ENCODE measurements at regions of chr7 and their contacts with region 1.

Region 1: GRCh38 chr7:17130281-17131059 is 168.0 kb upstream of the AHR start:
- DNase-seq: peak; percentile 78
- H3K4me3 Mint-ChIP-seq: peak overlapping the region; percentile 62
- H3K27ac Mint-ChIP-seq: peak overlapping the region; percentile 100
- H3K4me1 Mint-ChIP-seq: peaks cover 86% of the 10 kb centered on the region
- H3K27me3 Mint-ChIP-seq: no peaks in the 10 kb centered on the region
- CTCF ChIP-seq: no peak

Region 2: DNA sequence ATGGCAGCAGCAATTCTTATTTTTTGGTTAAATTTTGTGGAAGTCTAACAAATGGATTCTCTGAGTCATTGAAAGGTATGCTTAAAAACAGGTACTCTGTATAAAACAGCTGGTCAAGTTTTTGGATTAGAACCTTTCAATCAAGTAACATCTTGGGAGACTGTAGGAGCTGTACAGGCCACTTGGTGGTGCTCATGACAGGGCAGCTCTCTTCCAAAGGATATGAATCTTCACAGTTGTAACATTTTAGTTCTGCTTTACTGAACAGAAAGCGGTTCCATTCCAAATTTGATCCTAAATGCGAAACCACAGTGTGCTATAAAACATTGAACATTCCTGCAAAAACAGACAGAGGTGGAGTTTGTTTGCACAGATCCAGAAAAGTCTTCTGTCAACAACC is 204.2 kb before region 1 on chr7:
- CTCF ChIA-PET with region 1: no interaction called
- intact Hi-C with region 1: loop called (anchors 5 kb)
- DNase-seq: peak; percentile 57
- H3K4me3 Mint-ChIP-seq: no peak overlapping the region
- H3K27ac Mint-ChIP-seq: peak overlapping the region; percentile 48
- H3K4me1 Mint-ChIP-seq: peaks cover 78% of the 10 kb centered on the region
- H3K27me3 Mint-ChIP-seq: no peaks in the 10 kb centered on the region
- CTCF ChIP-seq: peak; percentile 72

Region 3: DNA sequence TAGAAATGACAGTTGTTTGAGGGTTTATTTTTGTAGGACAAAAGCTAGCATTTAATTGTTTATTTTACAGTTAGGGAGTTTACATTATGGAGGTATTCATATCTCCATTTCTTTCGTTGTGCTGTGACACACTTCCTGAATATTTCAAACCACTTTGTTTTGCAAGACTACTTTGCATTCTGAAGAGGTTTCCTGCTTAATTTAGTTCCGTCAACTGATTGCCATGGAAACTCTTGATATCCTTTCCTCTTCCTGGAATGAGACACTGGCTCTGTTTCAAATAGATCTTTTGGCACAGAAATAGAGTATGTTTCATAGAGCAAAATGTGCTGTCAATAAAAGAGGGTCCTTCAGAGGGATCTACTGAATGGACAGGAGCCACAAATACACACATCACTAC is 89.1 kb before region 1 on chr7:
- CTCF ChIA-PET with region 1: no interaction called
- intact Hi-C with region 1: loop called (anchors 1 kb)
- DNase-seq: no peak
- H3K4me3 Mint-ChIP-seq: no peak overlapping the region
- H3K27ac Mint-ChIP-seq: peak overlapping the region; percentile 76
- H3K4me1 Mint-ChIP-seq: peaks cover 80% of the 10 kb centered on the region
- H3K27me3 Mint-ChIP-seq: no peaks in the 10 kb centered on the region
- CTCF ChIP-seq: no peak

Region 4: DNA sequence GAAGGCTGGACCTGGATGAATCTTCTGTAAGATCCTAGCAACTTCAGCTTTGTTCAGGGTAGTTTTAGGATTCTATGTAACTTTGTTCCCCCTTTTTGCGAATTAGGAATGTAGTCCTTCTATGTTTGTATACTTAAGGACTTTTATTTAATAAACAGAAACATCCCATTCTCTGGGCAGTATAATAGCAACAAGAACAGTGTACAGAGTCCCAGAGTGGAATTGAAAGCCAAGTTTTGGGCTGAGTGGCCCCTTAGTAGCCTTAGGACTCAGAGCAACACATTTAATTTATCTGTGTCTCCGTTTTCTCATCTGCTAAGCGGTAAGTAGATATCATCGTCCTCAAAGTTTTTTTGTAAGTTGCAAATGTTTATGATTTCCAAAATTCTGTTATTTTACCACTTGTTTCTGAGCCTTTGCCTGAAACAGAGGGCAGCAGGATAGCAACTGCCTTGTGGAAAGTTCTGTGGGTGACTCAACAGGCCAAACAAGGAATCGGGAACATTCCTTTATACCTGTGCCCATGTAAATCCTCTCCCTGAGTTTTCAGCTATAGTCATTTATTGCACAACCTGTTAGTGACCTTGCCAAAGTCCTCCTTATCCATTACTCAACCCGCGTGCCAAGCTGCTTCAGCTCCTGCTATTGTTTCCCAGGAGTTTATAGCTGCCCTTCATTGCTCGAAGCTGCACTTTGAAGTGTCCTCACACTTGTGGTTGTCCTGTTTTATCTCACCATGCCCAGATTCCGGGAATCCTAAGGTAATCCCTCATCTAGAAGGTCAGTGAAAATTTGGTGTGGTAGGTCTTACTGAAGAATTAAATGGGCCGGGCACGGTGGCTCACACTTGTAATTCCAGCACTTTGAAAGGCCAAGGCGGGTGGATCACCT is 31.1 kb before region 1 on chr7:
- CTCF ChIA-PET with region 1: interaction called, 12 read pairs
- intact Hi-C with region 1: loop called (anchors 1 kb)
- DNase-seq: peak; percentile 78
- H3K4me3 Mint-ChIP-seq: peak overlapping the region; percentile 42
- H3K27ac Mint-ChIP-seq: peak overlapping the region; percentile 92
- H3K4me1 Mint-ChIP-seq: peaks cover 70% of the 10 kb centered on the region
- H3K27me3 Mint-ChIP-seq: no peaks in the 10 kb centered on the region
- CTCF ChIP-seq: no peak

Region 5: DNA sequence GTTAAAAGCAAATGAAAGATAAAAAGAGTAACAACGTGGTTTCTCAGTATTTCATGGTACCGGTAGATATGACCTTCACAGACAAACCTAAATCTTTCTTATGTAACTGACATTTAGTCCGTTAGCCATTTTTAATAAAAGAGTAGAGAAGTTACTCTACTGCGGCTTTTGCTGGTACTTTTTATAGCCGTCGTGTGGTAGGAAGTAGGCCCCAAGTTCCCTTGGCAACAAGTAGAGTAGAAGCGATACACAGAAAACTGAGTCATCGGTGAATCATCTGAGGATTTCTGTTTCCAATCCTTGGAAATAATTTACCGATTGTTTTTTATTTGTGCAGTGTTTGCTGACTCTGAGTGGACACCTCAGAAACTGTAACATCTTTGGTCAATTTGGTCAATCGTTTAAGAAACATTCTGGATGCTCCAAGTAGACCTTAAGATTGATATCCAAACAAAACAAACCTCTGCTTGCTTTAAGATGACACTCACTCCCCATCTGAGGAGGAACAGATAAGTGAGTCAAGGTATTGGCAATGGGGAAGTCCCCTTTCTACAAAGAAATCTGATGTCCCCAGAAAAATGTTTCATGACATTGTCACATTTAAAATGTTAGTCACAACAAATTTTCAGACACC is 104.0 kb after region 1 on chr7:
- CTCF ChIA-PET with region 1: no interaction called
- intact Hi-C with region 1: no loop called
- DNase-seq: peak; percentile 76
- H3K4me3 Mint-ChIP-seq: peak overlapping the region; percentile 50
- H3K27ac Mint-ChIP-seq: peak overlapping the region; percentile 96
- H3K4me1 Mint-ChIP-seq: peaks cover 94% of the 10 kb centered on the region
- H3K27me3 Mint-ChIP-seq: peaks cover 12% of the 10 kb centered on the region
- CTCF ChIP-seq: no peak

Region 6: GRCh38 chr7:17247357-17247756 is 116.9 kb after region 1 on chr7:
- CTCF ChIA-PET with region 1: interaction called, 3 read pairs
- intact Hi-C with region 1: loop called (anchors 5 kb)
- DNase-seq: no peak
- H3K4me3 Mint-ChIP-seq: no peak overlapping the region
- H3K27ac Mint-ChIP-seq: peak overlapping the region; percentile 48
- H3K4me1 Mint-ChIP-seq: peaks cover 44% of the 10 kb centered on the region
- H3K27me3 Mint-ChIP-seq: no peaks in the 10 kb centered on the region
- CTCF ChIP-seq: no peak

Region 7: DNA sequence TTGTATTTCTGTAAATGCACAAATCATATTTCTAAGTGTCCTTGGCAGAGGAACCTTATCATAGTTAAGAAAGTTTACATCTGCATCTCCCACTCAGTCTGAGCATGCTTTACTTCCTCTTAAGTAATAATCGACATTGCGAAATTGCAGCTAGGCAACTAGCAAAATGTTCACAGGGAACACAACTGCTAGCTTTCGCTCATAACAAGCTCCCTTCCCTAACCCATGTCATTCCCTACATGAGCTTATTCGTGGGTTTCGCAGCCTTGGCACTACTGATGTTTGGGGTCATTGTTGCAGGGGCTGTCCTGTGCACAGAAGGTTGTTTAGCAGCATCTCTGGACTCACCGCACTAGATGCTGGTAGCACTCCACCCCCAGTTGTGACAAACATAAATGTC is 239.6 kb after region 1 on chr7:
- CTCF ChIA-PET with region 1: no interaction called
- intact Hi-C with region 1: loop called (anchors 5 kb)
- DNase-seq: peak; percentile 69
- H3K4me3 Mint-ChIP-seq: peak overlapping the region; percentile 22
- H3K27ac Mint-ChIP-seq: peak overlapping the region; percentile 92
- H3K4me1 Mint-ChIP-seq: peaks cover 71% of the 10 kb centered on the region
- H3K27me3 Mint-ChIP-seq: no peaks in the 10 kb centered on the region
- CTCF ChIP-seq: no peak

Region 8: GRCh38 chr7:17466216-17466615 is 335.7 kb after region 1 on chr7:
- CTCF ChIA-PET with region 1: no interaction called
- intact Hi-C with region 1: no loop called
- DNase-seq: no peak
- H3K4me3 Mint-ChIP-seq: no peak overlapping the region
- H3K27ac Mint-ChIP-seq: no peak overlapping the region
- H3K4me1 Mint-ChIP-seq: no peaks in the 10 kb centered on the region
- H3K27me3 Mint-ChIP-seq: no peaks in the 10 kb centered on the region
- CTCF ChIP-seq: no peak